ENCODE measurements at regions of chr4 and their contacts with region 1.

Region 1: GRCh38 chr4:119041951-119042560 is 93.6 kb upstream of the MYOZ2 start:
- DNase-seq: peak; percentile 71
- ATAC-seq: peak; percentile 91
- H3K4me3 Mint-ChIP-seq: no peak overlapping the region
- H3K27ac Mint-ChIP-seq: no peak overlapping the region
- H3K4me1 Mint-ChIP-seq: peaks cover 13% of the 10 kb centered on the region
- H3K27me3 Mint-ChIP-seq: no peaks in the 10 kb centered on the region
- CTCF ChIP-seq: peak; percentile 82

Region 2: GRCh38 chr4:119139822-119140252 is 97.8 kb after region 1 on chr4:
- CTCF ChIA-PET with region 1: interaction called, 10 read pairs
- POLR2A ChIA-PET with region 1: no interaction called
- intact Hi-C with region 1: no loop called
- DNase-seq: no peak
- ATAC-seq: peak; percentile 17
- H3K4me3 Mint-ChIP-seq: no peak overlapping the region
- H3K27ac Mint-ChIP-seq: peak overlapping the region; percentile 88
- H3K4me1 Mint-ChIP-seq: peaks cover 31% of the 10 kb centered on the region
- H3K27me3 Mint-ChIP-seq: no peaks in the 10 kb centered on the region
- CTCF ChIP-seq: no peak

Region 3: DNA sequence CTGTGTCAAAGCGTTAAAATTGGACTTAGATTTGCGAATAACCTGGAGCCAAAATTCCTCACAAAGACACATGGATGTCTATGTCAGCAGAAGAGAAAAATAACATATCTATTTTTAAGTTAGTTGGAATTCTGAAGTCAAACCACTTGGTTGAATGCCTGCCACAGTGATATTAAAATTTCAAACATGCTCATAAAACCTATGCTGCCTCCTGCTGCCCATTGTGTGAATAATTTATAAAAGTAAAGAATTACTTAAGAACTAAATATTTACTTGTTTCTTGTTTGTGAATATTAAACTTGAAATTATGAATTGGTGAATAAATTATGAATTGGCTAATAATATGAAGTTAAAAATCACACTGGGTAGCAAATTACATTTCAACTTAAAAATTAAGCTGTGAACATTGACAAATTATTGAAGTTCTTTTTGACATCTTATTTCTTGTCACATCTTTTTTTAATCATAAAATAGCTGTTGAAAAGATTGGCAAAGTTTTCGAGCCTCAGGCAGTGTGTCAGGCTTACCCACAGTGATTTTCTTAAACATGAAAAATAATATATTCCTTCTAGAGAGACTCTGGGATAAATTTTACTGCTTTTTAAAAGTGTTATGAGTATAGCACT is 244.4 kb after region 1 on chr4:
- CTCF ChIA-PET with region 1: interaction called, 57 read pairs
- POLR2A ChIA-PET with region 1: no interaction called
- intact Hi-C with region 1: loop called (anchors 2 kb)
- DNase-seq: peak; percentile 43
- ATAC-seq: peak; percentile 39
- H3K4me3 Mint-ChIP-seq: no peak overlapping the region
- H3K27ac Mint-ChIP-seq: no peak overlapping the region
- H3K4me1 Mint-ChIP-seq: peaks cover 19% of the 10 kb centered on the region
- H3K27me3 Mint-ChIP-seq: no peaks in the 10 kb centered on the region
- CTCF ChIP-seq: peak; percentile 74

Region 4: GRCh38 chr4:119300101-119300978 is 258.3 kb after region 1 on chr4:
- CTCF ChIA-PET with region 1: interaction called, 28 read pairs
- POLR2A ChIA-PET with region 1: interaction called, 3 read pairs
- intact Hi-C with region 1: no loop called
- DNase-seq: peak; percentile 96
- ATAC-seq: peak; percentile 99
- H3K4me3 Mint-ChIP-seq: peak overlapping the region; percentile 92
- H3K27ac Mint-ChIP-seq: peak overlapping the region; percentile 98
- H3K4me1 Mint-ChIP-seq: peaks cover 25% of the 10 kb centered on the region
- H3K27me3 Mint-ChIP-seq: peaks cover 3% of the 10 kb centered on the region
- CTCF ChIP-seq: no peak

Measured in activated CD8-positive, alpha-beta T cell treated with anti-CD3 and anti-CD28 coated beads for 36 hours (primary cell).